ENCODE measurements at regions of chr21 and their contacts with region 1.

Region 1: GRCh38 chr21:44792702-44793591 is 8.7 kb downstream of the UBE2G2 start:
- DNase-seq: no peak
- ATAC-seq: peak; percentile 84
- H3K4me3 Mint-ChIP-seq: no peak overlapping the region
- H3K27ac Mint-ChIP-seq: no peak overlapping the region
- H3K4me1 Mint-ChIP-seq: peaks cover 49% of the 10 kb centered on the region
- H3K27me3 Mint-ChIP-seq: no peaks in the 10 kb centered on the region
- CTCF ChIP-seq: peak; percentile 68

Region 2: GRCh38 chr21:44024887-44025362 is 768.0 kb before region 1 on chr21:
- CTCF ChIA-PET with region 1: no interaction called
- POLR2A ChIA-PET with region 1: no interaction called
- intact Hi-C with region 1: loop called (anchors 10 kb)
- DNase-seq: no peak
- ATAC-seq: no peak
- H3K4me3 Mint-ChIP-seq: no peak overlapping the region
- H3K27ac Mint-ChIP-seq: peak overlapping the region; percentile 73
- H3K4me1 Mint-ChIP-seq: peaks cover 84% of the 10 kb centered on the region
- H3K27me3 Mint-ChIP-seq: no peaks in the 10 kb centered on the region
- CTCF ChIP-seq: no peak

Region 3: GRCh38 chr21:44510508-44511210 is 282.3 kb before region 1 on chr21:
- CTCF ChIA-PET with region 1: interaction called, 32 read pairs
- POLR2A ChIA-PET with region 1: no interaction called
- intact Hi-C with region 1: loop called (anchors 1 kb)
- DNase-seq: peak; percentile 66
- ATAC-seq: peak; percentile 72
- H3K4me3 Mint-ChIP-seq: no peak overlapping the region
- H3K27ac Mint-ChIP-seq: no peak overlapping the region
- H3K4me1 Mint-ChIP-seq: peaks cover 2% of the 10 kb centered on the region
- H3K27me3 Mint-ChIP-seq: peaks cover 10% of the 10 kb centered on the region
- CTCF ChIP-seq: no peak

Region 4: DNA sequence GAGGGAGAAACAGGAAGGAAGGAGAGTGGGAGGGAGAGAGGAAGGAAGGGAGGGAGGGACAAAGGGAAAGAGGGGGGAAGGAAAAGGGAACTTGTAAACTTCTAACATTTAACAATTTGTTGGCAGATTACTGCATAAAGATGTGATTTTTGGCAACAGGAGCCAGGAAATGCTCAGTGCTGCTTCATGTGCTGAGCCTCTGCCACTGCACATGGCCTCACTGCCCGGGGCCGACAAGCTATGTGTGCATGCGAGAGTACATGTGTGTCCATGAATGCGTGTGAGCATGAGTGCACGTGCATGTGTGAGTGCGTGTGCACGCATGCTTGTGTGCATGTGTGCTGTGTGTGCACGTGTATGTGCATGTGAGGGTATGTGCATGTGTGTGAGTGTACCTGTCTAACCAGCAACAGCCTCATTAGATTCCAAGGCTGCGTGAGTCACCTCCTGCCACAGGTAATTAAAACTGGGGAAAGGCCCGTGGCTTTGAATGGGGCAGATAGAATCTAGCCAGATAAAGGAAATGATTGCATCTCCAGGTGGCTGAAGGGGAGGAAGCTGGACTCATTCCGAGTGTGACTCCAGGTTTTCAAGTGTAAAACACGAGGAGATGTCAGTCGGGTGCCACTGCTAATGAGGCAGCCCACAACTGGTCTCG is 40.2 kb before region 1 on chr21:
- CTCF ChIA-PET with region 1: interaction called, 11 read pairs
- POLR2A ChIA-PET with region 1: no interaction called
- intact Hi-C with region 1: loop called (anchors 1 kb)
- DNase-seq: no peak
- ATAC-seq: no peak
- H3K4me3 Mint-ChIP-seq: no peak overlapping the region
- H3K27ac Mint-ChIP-seq: no peak overlapping the region
- H3K4me1 Mint-ChIP-seq: no peaks in the 10 kb centered on the region
- H3K27me3 Mint-ChIP-seq: peaks cover 15% of the 10 kb centered on the region
- CTCF ChIP-seq: no peak

Region 5: GRCh38 chr21:44780767-44781459 is 12.0 kb before region 1 on chr21:
- CTCF ChIA-PET with region 1: interaction called, 11 read pairs
- POLR2A ChIA-PET with region 1: no interaction called
- intact Hi-C with region 1: no loop called
- DNase-seq: no peak
- ATAC-seq: no peak
- H3K4me3 Mint-ChIP-seq: no peak overlapping the region
- H3K27ac Mint-ChIP-seq: no peak overlapping the region
- H3K4me1 Mint-ChIP-seq: peaks cover 15% of the 10 kb centered on the region
- H3K27me3 Mint-ChIP-seq: no peaks in the 10 kb centered on the region
- CTCF ChIP-seq: no peak

Region 6: GRCh38 chr21:44880762-44881585 is 88.0 kb after region 1 on chr21:
- CTCF ChIA-PET with region 1: no interaction called
- POLR2A ChIA-PET with region 1: no interaction called
- intact Hi-C with region 1: no loop called
- DNase-seq: no peak
- ATAC-seq: peak; percentile 32
- H3K4me3 Mint-ChIP-seq: peak overlapping the region; percentile 4
- H3K27ac Mint-ChIP-seq: peak overlapping the region; percentile 19
- H3K4me1 Mint-ChIP-seq: peaks cover 56% of the 10 kb centered on the region
- H3K27me3 Mint-ChIP-seq: no peaks in the 10 kb centered on the region
- CTCF ChIP-seq: no peak